ENCODE measurements at regions of chr2 and their contacts with region 1.

Region 1: DNA sequence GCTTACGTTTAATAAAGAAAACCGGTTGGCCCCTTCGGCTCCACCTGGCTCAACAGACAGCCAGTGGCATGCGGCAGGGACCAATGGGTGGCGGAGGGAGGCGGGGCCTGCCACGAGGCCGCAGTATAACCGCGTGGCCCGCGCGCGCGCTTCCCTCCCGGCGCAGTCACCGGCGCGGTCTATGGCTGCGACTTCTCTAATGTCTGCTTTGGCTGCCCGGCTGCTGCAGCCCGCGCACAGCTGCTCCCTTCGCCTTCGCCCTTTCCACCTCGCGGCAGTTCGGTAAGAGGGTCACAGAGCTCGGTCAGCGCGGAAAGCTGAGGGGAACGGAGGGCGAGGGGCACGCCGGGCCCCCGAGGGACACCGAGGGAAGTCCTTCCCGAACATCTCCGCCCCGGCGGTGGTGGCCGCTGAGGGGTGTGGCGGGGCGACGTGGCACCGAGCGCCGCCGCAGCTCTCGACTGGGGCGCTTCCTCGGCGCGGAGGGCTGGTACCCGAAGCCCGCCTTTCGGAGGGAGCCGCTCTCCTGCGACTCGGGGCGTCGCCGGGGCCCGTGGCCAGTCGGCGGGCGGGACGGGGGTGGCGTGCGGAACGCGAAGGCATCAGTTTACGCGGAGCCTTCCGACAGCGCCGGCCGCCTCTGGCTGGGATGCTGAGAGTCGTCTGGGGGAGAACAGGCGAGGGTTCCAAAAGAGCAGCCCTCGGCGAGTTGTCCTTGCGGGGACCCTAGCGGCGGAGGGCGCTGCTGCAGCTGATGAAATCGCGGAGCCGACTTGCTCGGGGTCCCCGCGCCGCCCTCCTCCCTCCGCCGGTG is at the start of gene MTHFD2:
- DNase-seq: peak; percentile 95
- H3K4me3 ChIP-seq: peak within 1 kb of the TSS; percentile 64 to 82
- H3K27ac ChIP-seq: peak within 1 kb of the TSS; percentile 86 to 97
- H3K4me1 ChIP-seq: peaks cover 5 to 18% of the 10 kb centered on the region in 2 experiments; a peak in 3 of 4 replicates
- H3K27me3 ChIP-seq: no peaks in the 10 kb centered on the region
- CTCF ChIP-seq: peak; percentile 73
- EP300 ChIP-seq: peak in 1 of 2 experiments; percentile 18; a peak in 1 of 4 replicates
- RAD21 ChIP-seq: peak; percentile 49
- polyA plus RNA-seq, gene MTHFD2: 68.6 and 82.6 TPM in 2 replicates

Region 2: GRCh38 chr2:73907840-73908452 is 290.7 kb before region 1 on chr2:
- CTCF ChIA-PET with region 1: no interaction called
- POLR2A ChIA-PET with region 1: no interaction called
- DNase-seq: no peak
- H3K4me3 ChIP-seq: no peak overlapping the region
- H3K27ac ChIP-seq: no peak overlapping the region
- H3K4me1 ChIP-seq: peaks cover 0 to 7% of the 10 kb centered on the region in 2 experiments; a peak in 1 of 4 replicates
- H3K27me3 ChIP-seq: no peaks in the 10 kb centered on the region; the same call in 1 of the 2 replicates
- CTCF ChIP-seq: peak; percentile 15; the same call in 1 of the 2 replicates
- EP300 ChIP-seq: no peak
- RAD21 ChIP-seq: peak; percentile 47; the same call in 1 of the 2 replicates

Region 3: DNA sequence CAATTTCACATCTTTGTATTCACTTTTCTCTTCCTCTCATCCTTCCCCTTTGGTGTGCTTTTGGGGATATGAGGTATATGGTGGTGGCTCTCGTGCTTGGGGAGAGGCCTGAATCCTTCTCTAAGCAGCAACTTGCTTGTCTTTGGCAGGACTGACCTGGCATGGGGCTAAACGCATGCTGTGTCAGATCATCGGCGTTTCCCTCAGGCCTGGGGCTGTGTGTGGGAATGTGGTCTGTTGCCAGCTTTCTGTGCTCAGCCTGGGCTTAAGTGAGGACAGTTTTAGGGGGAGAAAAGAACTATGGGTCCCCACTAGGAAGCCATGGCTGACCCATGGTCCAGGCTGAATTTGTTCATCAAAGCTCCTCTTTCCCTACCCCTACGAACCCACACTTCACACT is 153.2 kb before region 1 on chr2:
- CTCF ChIA-PET with region 1: no interaction called
- POLR2A ChIA-PET with region 1: no interaction called
- DNase-seq: no peak
- H3K4me3 ChIP-seq: no peak overlapping the region
- H3K27ac ChIP-seq: no peak overlapping the region
- H3K4me1 ChIP-seq: peaks cover 0 to 24% of the 10 kb centered on the region in 2 experiments; a peak in 1 of 4 replicates
- H3K27me3 ChIP-seq: no peaks in the 10 kb centered on the region
- CTCF ChIP-seq: no peak
- EP300 ChIP-seq: no peak
- RAD21 ChIP-seq: no peak

Region 4: GRCh38 chr2:74178201-74179062 is 20.2 kb before region 1 on chr2 and contains the start of gene MOB1A:
- CTCF ChIA-PET with region 1: interaction called, 9 read pairs
- POLR2A ChIA-PET with region 1: interaction called, 24 read pairs
- DNase-seq: peak; percentile 97
- H3K4me3 ChIP-seq: peak within 1 kb of the TSS; percentile 71 to 96
- H3K27ac ChIP-seq: peak within 1 kb of the TSS; percentile 87 to 94
- H3K4me1 ChIP-seq: peaks cover 4 to 6% of the 10 kb centered on the region in 2 experiments; a peak in 3 of 4 replicates
- H3K27me3 ChIP-seq: no peaks in the 10 kb centered on the region
- CTCF ChIP-seq: no peak
- EP300 ChIP-seq: no peak
- RAD21 ChIP-seq: no peak
- polyA plus RNA-seq, gene MOB1A: 15.3 and 19.7 TPM in 2 replicates

Measured in SK-N-SH (cell line).